Ovary (tissue), 10 donors: ENCODE measurements at regions of chr1 and their contacts with region 1.

Region 1: GRCh38 chr1:97898948-97899347 is 21.9 kb downstream of the DPYD start:
- DNase-seq: no peak
- H3K4me3 ChIP-seq: no peak overlapping the region
- H3K27ac ChIP-seq: no peak overlapping the region
- H3K4me1 ChIP-seq: peaks cover 2% of the 10 kb centered on the region
- H3K27me3 ChIP-seq: no peaks in the 10 kb centered on the region
- CTCF ChIP-seq: no peak
- EP300 ChIP-seq: no peak
- POLR2A ChIP-seq: no peak

Region 2: DNA sequence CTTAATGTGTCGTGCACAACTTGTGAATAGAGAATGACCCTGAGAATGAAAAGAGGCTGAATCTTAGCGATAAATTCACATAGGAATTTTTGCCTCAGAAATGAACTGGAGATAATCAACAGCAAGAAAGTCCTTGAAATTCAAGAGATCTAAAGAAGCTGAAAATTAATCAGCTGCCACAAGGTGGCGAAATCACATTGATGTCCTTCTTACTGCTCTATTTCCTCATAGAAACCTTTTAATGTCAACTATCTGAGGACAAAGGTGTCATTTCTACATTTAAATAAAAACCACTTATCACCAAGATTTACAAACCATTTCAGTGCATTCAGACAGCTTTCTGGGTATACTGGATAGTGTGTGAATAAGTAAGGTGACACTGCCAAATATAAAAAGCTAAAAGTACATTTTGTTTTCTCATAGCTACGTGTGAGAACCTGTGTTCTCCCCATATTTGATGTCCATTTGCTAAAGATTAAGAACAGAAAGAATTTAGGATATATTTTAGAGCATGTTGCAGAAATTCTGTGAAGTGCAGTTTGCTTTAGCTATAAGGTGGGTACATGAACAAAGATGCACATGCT is 1662.7 kb before region 1 on chr1:
- intact Hi-C with region 1: loop called in 1 of 4 experiments (anchors 5 kb)
- DNase-seq: no peak
- H3K4me3 ChIP-seq: no peak overlapping the region
- H3K27ac ChIP-seq: no peak overlapping the region
- H3K4me1 ChIP-seq: no peaks in the 10 kb centered on the region
- H3K27me3 ChIP-seq: no peaks in the 10 kb centered on the region
- CTCF ChIP-seq: peak in 1 of 3 donors; percentile 17
- EP300 ChIP-seq: no peak
- POLR2A ChIP-seq: no peak

Region 3: GRCh38 chr1:98196012-98196411 is 297.1 kb after region 1 on chr1:
- intact Hi-C with region 1: no loop called
- DNase-seq: no peak
- H3K4me3 ChIP-seq: no peak overlapping the region
- H3K27ac ChIP-seq: no peak overlapping the region
- H3K4me1 ChIP-seq: no peaks in the 10 kb centered on the region
- H3K27me3 ChIP-seq: no peaks in the 10 kb centered on the region
- CTCF ChIP-seq: no peak
- EP300 ChIP-seq: no peak
- POLR2A ChIP-seq: no peak